ENCODE measurements at regions of chr2 and their contacts with region 1.

Region 1: GRCh38 chr2:222024932-222025880 is 273.6 kb downstream of the PAX3 start:
- DNase-seq: no peak
- H3K4me3 ChIP-seq: no peak overlapping the region
- H3K27ac ChIP-seq: no peak overlapping the region
- H3K27me3 ChIP-seq: peaks cover 10% of the 10 kb centered on the region
- CTCF ChIP-seq: peak; percentile 80

Region 2: GRCh38 chr2:221731443-221732145 is 293.6 kb before region 1 on chr2:
- CTCF ChIA-PET with region 1: no interaction called
- POLR2A ChIA-PET with region 1: no interaction called
- DNase-seq: no peak
- H3K4me3 ChIP-seq: no peak overlapping the region
- H3K27ac ChIP-seq: no peak overlapping the region
- H3K27me3 ChIP-seq: no peaks in the 10 kb centered on the region
- CTCF ChIP-seq: no peak

Region 3: DNA sequence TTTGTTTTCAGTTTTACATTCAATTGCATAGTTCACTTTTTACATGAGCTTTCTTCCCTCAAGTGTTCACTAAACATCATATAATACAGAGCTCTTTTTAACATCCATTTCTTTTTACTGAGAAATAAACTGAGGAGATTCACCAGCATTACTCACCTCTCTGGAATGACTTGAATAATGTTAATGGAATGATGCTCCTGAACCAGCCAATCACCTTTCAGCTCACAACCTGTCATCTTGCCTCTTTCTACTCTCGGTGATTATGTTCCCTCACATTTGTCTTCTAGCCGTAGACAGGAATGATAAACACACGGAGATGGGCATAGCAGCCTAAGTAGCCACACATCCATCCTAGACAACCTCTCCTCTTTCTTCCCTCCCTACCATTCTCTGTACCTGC is 28.1 kb before region 1 on chr2:
- CTCF ChIA-PET with region 1: interaction called, 21 read pairs
- POLR2A ChIA-PET with region 1: no interaction called
- DNase-seq: peak; percentile 63
- H3K4me3 ChIP-seq: no peak overlapping the region
- H3K27ac ChIP-seq: no peak overlapping the region
- H3K27me3 ChIP-seq: no peaks in the 10 kb centered on the region
- CTCF ChIP-seq: no peak

Region 4: DNA sequence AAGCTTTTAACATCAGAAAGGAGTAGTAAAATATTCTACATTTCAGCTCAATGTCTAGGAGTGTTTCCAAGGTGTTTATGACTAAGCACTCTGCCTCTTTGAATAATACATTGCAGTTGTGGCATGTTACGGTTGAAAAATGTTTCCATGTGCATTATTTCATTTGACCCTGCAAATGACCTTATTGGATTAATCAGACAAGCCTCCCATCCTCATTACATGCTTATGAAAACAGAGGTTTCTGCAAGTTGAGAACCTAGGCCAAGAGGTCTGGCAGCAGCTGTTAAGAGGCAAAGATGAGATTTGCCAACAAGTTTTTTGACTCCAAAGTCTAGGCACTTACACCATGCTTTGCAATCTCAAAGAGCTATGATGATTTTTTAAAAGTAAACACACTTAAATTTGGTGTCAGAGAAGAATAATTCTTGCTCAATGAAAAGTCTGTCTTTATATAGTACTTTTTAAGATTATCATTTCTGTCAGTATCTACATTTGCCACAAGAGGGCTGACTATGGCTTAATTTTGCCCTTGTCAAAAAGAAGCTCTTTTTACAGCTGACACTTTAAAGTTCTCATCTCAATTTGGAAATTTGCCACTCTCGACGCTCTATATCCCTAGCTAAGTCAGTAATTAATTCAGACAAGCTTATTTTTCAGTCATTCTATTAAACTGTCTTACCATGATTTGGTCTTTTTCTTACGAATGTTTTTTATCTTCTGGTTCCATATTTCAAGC is 13.0 kb after region 1 on chr2:
- CTCF ChIA-PET with region 1: interaction called, 53 read pairs
- POLR2A ChIA-PET with region 1: no interaction called
- DNase-seq: no peak
- H3K4me3 ChIP-seq: no peak overlapping the region
- H3K27ac ChIP-seq: no peak overlapping the region
- H3K27me3 ChIP-seq: no peaks in the 10 kb centered on the region
- CTCF ChIP-seq: peak; percentile 56

Region 5: DNA sequence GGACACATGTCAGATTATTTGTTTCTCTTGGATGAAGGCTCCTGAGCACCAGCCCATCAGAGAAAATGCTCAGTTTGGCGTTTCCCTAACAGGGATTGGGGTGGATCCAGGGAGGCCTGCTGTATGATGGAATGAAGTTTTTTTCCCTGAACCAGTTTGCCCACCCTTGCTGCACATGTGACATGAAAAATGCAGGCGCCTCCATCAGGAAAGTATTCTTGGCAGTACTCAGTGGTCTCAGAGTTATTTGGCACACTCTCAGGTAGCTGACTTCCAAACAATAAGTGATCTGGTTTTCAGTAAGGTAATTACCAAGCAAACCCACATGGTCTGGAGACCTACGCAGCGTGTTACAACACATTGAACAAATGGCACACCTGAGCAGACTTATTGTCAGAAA is 18.7 kb after region 1 on chr2:
- CTCF ChIA-PET with region 1: interaction called, 53 read pairs
- POLR2A ChIA-PET with region 1: no interaction called
- DNase-seq: no peak
- H3K4me3 ChIP-seq: no peak overlapping the region
- H3K27ac ChIP-seq: no peak overlapping the region
- H3K27me3 ChIP-seq: no peaks in the 10 kb centered on the region
- CTCF ChIP-seq: no peak

Region 6: GRCh38 chr2:222050981-222051380 is 25.8 kb after region 1 on chr2:
- CTCF ChIA-PET with region 1: interaction called, 12 read pairs
- POLR2A ChIA-PET with region 1: no interaction called
- DNase-seq: no peak
- H3K4me3 ChIP-seq: no peak overlapping the region
- H3K27ac ChIP-seq: no peak overlapping the region
- H3K27me3 ChIP-seq: no peaks in the 10 kb centered on the region
- CTCF ChIP-seq: no peak

Region 7: DNA sequence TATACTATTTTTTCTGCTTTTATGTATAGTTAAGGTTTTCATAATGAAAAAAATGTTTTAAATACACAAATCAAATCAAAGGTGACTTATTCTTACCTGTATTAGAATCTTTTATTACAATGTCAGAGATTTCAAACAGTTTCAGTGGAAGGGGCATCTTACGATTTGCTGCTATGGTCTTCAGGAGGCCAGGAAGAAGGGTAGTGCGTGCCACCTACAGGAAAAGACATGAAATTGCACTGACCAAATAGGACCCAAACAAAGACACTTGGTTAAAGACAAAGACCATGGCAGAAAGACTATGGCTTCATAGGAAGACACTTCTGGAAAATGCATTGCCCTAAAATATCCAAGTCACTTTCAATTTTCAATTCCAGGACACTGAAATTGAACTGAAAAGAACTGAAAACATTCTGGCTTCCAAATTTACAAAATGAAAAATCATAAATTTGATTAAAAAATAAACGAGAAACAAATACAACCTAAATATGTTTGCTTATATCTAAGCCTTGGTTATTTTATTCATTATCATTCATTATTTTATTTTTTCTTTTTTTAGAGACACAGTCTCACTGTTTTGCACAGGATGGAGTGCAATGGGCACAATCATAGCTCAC is 588.6 kb after region 1 on chr2:
- CTCF ChIA-PET with region 1: interaction called, 20 read pairs
- POLR2A ChIA-PET with region 1: no interaction called
- DNase-seq: peak; percentile 10
- H3K4me3 ChIP-seq: no peak overlapping the region
- H3K27ac ChIP-seq: no peak overlapping the region
- H3K27me3 ChIP-seq: no peaks in the 10 kb centered on the region
- CTCF ChIP-seq: peak; percentile 92